ENCODE measurements at regions of chr19 and their contacts with region 1.

Region 1: DNA sequence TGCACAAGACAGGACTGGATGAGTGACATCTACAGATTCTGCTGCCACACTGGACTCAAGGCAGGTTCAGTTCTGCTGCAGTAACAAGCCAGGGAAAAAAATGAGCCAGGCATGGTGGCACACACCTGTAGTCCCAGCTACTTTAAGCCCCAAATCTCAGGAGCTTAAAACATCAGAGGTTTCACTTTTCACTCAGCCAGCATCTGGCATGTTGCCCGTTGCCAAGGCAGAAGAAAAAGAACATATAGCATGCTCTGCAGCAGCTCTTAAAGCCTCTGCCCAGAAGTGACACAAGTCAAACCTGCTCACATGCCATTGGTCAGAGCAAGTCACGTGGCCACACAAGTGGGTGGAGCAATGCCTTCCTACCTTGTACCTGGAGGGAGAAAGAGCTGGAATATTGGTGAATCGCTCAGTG is 14.7 kb upstream of the ADGRE5 start:
- DNase-seq: peak; percentile 84
- H3K4me3 Mint-ChIP-seq: peak overlapping the region; percentile 59
- H3K27ac Mint-ChIP-seq: peak overlapping the region; percentile 96
- H3K4me1 Mint-ChIP-seq: peaks cover 60% of the 10 kb centered on the region
- H3K27me3 Mint-ChIP-seq: no peaks in the 10 kb centered on the region

Region 2: DNA sequence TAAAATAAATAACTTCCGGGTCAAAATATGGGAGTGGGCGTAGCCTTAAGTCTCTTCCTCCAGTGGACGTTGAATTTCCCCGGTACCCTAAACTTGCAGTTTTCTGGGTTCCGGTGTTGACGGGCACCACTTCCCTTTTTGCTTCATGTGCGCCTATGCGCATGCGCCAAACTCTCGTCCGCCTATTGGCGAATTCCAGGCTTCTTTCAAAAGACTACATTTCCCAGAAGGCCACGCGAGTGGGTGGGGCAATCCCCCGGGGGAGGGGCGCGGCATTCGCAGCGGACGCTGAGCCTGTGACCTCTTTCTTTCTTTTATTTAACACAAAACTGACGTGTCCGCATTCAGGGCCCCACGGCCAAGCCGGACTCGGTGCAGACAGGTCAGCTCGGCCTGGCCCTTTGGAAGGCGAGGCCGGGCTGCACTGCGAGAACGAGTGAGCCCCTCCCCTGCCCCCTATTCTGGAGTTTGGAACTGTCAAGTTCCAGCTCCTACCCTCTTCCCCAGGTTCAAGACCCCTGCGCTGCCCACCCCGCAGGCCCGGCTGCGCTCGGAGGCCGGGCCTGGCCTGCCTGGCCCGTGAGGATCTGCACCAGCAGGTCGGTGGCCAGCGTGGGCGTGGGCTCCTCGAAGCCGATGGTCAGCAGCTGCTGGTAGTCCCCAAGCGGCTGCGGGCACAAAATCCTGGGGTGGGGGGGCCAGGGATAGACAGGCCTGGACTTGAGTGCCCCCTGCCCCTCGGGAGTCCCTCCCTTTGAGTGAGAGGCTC is 285.0 kb before region 1 on chr19:
- intact Hi-C with region 1: no loop called
- DNase-seq: peak; percentile 99
- H3K4me3 Mint-ChIP-seq: peak overlapping the region; percentile 93
- H3K27ac Mint-ChIP-seq: peak overlapping the region; percentile 93
- H3K4me1 Mint-ChIP-seq: peaks cover 7% of the 10 kb centered on the region
- H3K27me3 Mint-ChIP-seq: no peaks in the 10 kb centered on the region

Region 3: DNA sequence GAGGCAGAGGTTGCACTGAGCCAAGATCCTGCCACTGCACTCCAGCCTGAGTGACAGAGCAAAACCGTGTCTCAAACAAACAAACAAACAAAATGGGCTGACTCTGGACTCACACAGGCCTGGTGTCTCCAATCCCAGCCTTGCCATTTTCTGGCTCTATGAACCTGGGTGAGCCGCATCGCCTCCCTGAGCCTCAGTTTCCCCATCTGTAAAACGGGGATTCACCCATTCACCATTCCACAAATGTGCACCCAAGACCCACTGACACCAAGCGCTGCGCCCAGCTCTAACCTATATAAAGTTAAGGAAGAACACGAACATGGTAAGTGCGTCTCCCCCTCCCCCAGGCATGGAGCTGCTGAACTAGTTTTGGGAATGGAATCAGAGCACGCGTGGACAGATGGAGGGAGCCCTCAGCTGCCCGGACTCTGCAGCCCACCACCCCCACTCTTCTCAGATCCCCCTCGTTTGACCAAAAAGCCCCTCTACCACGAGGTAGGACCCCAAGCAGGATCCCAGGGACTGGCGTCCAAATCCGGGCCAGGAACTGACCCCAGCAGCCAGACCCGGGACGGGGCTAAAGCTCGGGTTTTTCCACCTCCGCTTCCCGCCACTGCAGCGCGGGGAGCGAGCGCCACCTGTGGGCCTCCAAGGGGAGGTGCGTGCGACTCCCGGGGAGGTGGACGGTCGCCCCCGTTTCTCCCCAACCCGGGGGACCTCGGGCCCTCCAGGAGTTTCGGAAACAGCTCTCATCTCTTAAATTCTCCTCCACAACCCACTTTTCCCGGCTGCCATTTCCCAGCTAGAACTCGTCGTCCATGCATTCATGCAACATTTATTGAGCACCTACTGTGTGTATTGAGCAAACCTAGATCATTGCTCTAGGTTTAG is 18.3 kb before region 1 on chr19:
- intact Hi-C with region 1: no loop called
- DNase-seq: peak; percentile 54
- H3K4me3 Mint-ChIP-seq: peak overlapping the region; percentile 42
- H3K27ac Mint-ChIP-seq: peak overlapping the region; percentile 32
- H3K4me1 Mint-ChIP-seq: peaks cover 14% of the 10 kb centered on the region
- H3K27me3 Mint-ChIP-seq: no peaks in the 10 kb centered on the region

Region 4: DNA sequence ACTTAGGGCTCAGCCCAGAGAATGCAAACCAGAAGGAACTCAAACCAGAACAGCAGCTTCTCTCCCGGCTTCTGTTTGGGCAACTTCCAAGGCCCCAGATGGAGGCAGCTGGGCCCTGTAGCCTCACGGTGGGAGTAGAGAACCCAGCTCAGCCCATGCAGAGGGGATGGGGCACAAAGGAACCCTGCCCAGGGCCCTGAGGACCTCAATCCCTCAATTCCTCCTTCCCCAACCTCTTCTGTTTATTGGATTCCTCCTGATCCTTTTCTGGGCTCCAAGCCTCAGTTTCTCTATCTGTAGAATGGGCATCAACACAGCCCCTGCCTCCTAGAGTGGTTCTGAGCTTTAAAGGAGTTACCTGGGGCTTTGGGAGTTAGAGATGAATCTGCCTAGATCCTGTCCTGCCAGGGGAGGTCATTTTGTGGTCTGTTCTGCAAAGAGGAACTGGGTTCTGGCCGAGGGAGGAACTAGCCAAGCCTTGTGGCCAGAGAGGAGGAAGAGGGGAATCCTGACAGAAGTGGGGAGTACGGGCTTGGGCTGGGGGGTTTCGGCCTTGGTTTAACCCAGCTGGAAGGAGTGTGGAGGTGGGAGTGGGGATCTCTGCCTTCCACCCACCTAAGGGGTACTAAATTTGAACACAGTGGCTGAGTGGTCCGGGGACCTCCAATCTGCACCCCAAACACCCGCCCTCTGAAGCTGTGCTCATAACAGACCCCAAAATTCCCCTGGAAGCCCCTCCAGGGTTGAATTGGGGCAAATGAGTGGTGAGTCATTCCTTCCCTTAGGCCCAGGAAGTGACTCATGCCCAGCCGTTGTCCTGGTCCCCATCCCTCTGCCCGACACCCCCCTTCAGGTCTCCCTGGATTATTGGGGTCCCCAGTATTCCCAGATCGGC is 17.4 kb after region 1 on chr19:
- intact Hi-C with region 1: loop called (anchors 1 kb)
- DNase-seq: peak; percentile 50
- H3K4me3 Mint-ChIP-seq: peak overlapping the region; percentile 97
- H3K27ac Mint-ChIP-seq: peak overlapping the region; percentile 98
- H3K4me1 Mint-ChIP-seq: peaks cover 29% of the 10 kb centered on the region
- H3K27me3 Mint-ChIP-seq: no peaks in the 10 kb centered on the region

Region 5: DNA sequence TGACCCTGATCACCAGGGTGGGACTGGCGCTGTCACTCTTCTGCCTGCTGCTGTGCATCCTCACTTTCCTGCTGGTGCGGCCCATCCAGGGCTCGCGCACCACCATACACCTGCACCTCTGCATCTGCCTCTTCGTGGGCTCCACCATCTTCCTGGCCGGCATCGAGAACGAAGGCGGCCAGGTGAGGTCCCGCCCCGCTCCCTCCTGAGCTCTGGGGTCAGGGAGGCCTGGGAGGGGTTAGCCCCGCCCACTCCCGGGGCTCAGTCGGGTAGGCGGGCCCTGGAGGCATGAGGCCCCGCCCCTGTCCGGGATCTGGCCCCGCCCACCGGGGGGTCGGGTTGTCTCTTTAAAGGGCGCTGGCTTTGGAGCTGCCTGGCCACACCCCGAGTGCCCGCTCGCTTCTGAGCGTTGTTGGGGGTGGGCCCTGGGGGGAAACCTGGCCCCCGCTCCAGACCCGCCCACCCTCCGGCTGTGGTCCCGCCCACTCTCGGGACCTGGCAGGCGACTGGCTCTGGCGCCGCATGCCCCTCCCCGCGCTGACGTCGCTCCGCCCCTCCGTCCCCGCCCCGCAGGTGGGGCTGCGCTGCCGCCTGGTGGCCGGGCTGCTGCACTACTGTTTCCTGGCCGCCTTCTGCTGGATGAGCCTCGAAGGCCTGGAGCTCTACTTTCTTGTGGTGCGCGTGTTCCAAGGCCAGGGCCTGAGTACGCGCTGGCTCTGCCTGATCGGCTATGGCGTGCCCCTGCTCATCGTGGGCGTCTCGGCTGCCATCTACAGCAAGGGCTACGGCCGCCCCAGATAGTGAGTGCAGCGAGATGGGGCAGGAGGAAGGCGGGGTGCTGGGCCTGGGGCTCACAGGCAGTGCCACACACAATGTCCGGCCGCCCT is 39.5 kb after region 1 on chr19:
- intact Hi-C with region 1: loop called (anchors 1 kb)
- DNase-seq: peak; percentile 87
- H3K4me3 Mint-ChIP-seq: no peak overlapping the region
- H3K27ac Mint-ChIP-seq: peak overlapping the region; percentile 65
- H3K4me1 Mint-ChIP-seq: peaks cover 6% of the 10 kb centered on the region
- H3K27me3 Mint-ChIP-seq: no peaks in the 10 kb centered on the region

Region 6: DNA sequence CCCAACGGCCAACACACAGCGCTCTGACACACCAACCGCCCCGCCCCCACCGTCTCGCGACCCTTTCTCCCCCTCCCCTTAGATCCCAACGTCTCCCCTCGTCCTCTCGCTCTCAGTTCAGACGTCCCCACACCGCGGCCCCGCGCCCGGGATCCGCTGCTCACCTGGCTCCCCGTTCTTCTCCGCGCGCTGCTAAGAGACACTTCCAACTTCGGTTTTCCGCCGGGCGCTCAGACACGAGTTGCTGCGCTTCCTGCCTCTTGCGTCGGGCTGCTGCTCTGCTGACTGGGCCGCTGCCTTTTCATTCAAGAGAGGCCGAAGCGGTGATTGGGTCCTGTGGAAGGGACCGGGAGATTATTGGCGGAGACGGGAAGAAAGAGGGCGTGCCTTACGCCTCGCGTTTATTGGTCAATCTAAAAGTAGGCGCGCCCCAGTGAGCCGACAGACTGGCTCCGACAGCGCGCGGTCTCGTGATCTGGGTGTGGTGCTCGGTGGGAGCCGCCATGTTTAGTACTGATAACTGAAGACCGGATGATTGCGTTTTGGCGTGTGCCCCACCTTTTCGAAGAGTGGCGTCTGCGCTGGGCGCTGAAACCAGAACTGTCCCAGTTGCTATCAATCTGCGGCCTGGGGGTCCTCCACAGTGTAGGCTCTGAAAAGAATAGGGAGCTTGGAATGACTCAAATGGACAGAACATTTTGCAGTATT is 52.8 kb after region 1 on chr19 and contains the start of gene DDX39A:
- intact Hi-C with region 1: loop called (anchors 1 kb)
- DNase-seq: peak; percentile 99
- H3K4me3 Mint-ChIP-seq: peak within 1 kb of the TSS; percentile 93
- H3K27ac Mint-ChIP-seq: peak within 1 kb of the TSS; percentile 97
- H3K4me1 Mint-ChIP-seq: peaks cover 20% of the 10 kb centered on the region
- H3K27me3 Mint-ChIP-seq: no peaks in the 10 kb centered on the region
- total RNA-seq, gene DDX39A: 268 TPM in 2 replicates

Measured in activated T-helper 2 cell treated with anti-CD3 and anti-CD28 coated beads, Interferon-gamma antibody, Interleukin-2, Interleukin-4, amounts not matched to agents 10 μg/mL and 5 μg/mL and 100 μg/mL, durations not matched to agents 14 hours and 24 hours and 36 hours (primary cell).